ENCODE measurements at regions of chr11 and their contacts with region 1.

Region 1: DNA sequence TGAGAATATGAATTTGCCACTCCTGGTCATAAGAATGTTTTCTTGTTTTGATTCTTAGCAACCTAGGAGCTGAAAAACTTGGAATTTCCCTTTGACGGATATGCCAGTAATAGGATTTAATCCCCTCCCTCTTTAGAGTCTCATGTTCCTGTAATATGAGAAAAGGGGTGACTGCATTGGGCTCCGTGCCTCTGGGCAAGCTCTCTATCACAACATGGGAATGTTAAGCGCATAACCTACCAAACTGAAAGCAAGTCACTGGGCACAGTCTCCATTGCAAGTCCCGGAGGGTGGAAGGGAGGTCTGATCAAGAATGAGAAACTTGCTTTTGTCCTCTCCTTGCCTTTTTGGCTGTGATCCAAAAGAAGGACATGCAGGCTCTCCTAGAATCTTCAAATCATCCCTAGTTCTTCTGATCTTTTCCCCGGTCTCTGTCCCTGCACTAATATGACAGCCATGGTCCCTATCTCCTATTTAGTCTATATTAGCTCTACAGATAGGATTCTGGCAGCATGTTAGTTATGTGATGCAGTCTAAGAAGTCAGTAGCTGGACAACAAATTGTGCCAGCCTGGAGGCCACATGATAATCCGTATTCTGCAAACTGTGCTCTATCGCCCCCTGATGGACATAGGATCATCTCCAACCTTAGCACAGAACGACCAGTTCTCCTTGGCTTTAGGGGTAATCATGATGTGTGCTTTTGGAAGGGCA is 11.7 kb downstream of the OR10D3 start:
- DNase-seq: peak; percentile 48
- H3K4me3 ChIP-seq: no peak overlapping the region
- H3K27ac ChIP-seq: no peak overlapping the region
- H3K4me1 ChIP-seq: no peaks in the 10 kb centered on the region
- H3K27me3 ChIP-seq: peaks cover 5% of the 10 kb centered on the region
- CTCF ChIP-seq: peak; percentile 89 to 94

Region 2: GRCh38 chr11:123741159-123742028 is 453.5 kb before region 1 on chr11 and contains the start of gene ZNF202:
- CTCF ChIA-PET with region 1: no interaction called
- dilution Hi-C with region 1: no loop called
- in situ Hi-C with region 1: no loop called
- intact Hi-C with region 1: loop called (anchors 10 kb)
- DNase-seq: peak; percentile 84
- H3K4me3 ChIP-seq: peak within 1 kb of the TSS; percentile 84 to 98 (median 91)
- H3K27ac ChIP-seq: peak within 1 kb of the TSS; percentile 49
- H3K4me1 ChIP-seq: peaks cover 15% of the 10 kb centered on the region
- H3K27me3 ChIP-seq: no peaks in the 10 kb centered on the region
- CTCF ChIP-seq: peak in 1 of 2 donors; percentile 31
- total RNA-seq, gene ZNF202: 6.7 to 19.3 TPM

Region 3: DNA sequence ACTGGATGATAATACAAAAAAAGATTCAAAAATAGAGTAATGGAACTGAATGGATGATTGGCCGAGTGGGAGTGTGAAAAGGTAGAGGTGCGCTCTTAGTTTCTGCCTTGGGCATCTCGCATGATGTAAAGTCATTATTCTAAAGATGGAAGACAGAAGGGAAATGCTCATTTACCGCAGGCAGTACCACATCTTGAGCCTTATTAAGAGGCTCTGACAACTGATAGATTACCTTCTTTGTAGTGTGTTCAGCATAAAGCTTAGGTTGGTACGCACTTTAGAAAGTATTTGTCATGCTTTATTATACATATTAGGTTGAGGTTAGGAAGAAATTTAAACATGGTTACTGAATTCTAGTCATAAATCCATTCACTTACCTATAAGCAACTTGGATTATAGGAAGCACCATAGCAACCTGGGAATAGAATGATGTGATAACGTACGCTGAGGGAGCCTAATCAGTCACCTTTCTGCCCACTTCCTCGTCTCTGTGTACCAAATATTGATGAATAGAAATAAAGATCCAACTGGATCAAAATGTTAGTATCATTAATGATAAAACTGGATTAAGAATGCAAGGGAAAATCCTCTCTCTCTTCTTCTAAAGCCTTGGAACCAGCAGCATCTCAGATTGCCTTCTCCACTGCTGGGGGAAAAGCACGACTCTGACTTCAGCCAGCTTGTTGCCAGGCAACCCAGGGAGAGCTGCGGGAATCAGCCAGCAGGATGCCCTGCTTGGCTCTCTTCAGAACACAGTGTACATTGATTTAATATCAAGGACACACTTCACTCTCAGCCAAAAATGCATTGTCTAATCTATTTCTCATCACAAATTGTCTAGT is 108.6 kb before region 1 on chr11:
- CTCF ChIA-PET with region 1: no interaction called
- dilution Hi-C with region 1: loop called (anchors 5 kb)
- in situ Hi-C with region 1: no loop called
- intact Hi-C with region 1: no loop called
- DNase-seq: no peak
- H3K4me3 ChIP-seq: no peak overlapping the region
- H3K27ac ChIP-seq: no peak overlapping the region
- H3K4me1 ChIP-seq: peaks cover 18% of the 10 kb centered on the region
- H3K27me3 ChIP-seq: no peaks in the 10 kb centered on the region
- CTCF ChIP-seq: no peak

Region 4: DNA sequence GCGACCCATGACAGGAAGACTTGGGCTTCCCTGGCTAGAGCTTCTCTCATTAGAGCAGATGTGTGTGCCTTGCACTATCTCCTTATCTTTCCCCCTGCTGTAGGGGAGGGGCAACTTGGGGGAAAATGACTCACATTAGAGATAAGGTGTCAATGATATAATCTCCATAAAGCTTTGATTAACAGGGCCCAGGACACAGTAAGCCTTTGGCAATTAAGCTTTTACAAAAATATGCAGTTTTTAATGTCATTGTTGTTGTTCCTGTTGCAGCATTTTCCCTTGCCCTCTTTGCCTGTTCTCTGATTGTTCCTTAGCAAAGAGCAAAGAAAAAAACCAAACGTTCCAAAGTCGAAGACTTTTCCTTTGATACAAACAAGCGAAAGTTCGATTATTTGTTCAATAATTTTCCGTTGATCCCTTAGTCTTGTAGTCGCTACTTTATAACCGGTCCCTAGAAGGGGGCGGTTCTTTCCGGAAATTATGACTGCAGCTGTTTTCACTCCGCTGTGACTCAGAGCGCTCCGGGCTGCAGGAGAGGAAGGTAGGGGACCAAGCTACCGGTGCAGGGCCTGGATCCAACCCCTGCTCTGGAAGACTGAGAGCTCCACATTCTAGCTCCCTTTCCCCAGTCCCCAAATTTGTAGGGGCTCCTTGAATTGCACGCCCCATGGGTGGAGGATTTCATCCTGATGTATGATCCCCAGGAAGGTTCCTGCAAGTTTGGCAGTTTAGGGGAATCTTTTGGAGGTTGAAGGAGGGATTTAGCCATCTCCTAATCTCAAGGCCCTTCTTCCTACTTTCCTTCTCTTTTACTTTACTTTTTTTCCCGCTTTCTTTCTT is 79.7 kb before region 1 on chr11 and contains the start of gene VWA5A:
- CTCF ChIA-PET with region 1: no interaction called
- dilution Hi-C with region 1: no loop called
- in situ Hi-C with region 1: no loop called
- intact Hi-C with region 1: loop called (anchors 5 kb)
- DNase-seq: peak; percentile 90
- H3K4me3 ChIP-seq: peak within 1 kb of the TSS; percentile 61 to 86 (median 71)
- H3K27ac ChIP-seq: peak within 1 kb of the TSS; percentile 27
- H3K4me1 ChIP-seq: peaks cover 12% of the 10 kb centered on the region
- H3K27me3 ChIP-seq: no peaks in the 10 kb centered on the region
- CTCF ChIP-seq: no peak
- total RNA-seq, gene VWA5A: 24.7 to 35.2 TPM